Activated CD4-positive, alpha-beta memory T cell treated with anti-CD3 and anti-CD28 coated beads for 36 hours (primary cell): ENCODE measurements at regions of chr7 and their contacts with region 1.

Region 1: DNA sequence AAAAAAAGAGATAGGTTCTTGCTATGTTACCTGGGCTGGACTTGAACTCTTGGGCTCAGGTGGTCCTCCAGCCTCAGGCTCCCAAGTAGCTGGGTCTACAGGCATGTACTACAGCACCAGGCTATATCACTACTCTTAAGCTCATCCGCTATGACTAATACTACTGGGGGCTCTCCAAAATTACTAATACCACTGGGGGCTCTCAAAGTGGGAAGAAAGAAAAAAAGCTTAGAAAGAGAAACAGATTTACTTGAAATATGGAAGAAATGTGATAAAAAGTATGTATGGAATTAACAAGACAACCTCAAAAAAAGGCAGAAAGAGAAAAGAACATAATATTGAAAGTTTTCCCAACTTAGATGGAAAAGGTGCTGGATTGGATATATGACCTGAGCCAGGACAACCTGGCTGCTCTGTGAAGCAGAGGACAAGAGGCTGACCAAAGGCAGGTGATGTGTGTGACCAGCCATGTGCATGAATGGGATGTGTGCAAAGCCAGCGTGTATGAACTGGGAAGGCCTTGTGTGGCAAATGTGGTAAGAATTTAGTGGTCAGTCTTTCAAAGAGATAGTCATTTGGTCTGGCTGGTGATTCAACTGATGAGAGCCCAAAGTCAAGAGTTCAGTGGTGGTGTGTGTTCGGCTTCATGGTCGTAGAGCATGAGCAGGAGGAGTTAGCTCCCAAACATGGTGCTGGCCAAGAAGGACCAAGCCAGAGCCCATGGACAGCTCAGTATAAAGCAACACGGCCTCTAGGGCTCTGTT is 232.4 kb upstream of the KLF14 start:
- DNase-seq: peak; percentile 53
- H3K4me3 Mint-ChIP-seq: peak overlapping the region; percentile 42
- H3K27ac Mint-ChIP-seq: peak overlapping the region; percentile 94
- H3K4me1 Mint-ChIP-seq: peaks cover 77% of the 10 kb centered on the region
- H3K27me3 Mint-ChIP-seq: no peaks in the 10 kb centered on the region

Region 2: GRCh38 chr7:130515315-130516040 is 450.9 kb before region 1 on chr7:
- CTCF ChIA-PET with region 1: no interaction called
- POLR2A ChIA-PET with region 1: no interaction called
- intact Hi-C with region 1: no loop called
- DNase-seq: no peak
- H3K4me3 Mint-ChIP-seq: no peak overlapping the region
- H3K27ac Mint-ChIP-seq: no peak overlapping the region
- H3K4me1 Mint-ChIP-seq: no peaks in the 10 kb centered on the region
- H3K27me3 Mint-ChIP-seq: no peaks in the 10 kb centered on the region

Region 3: GRCh38 chr7:130668257-130669084 is 298.0 kb before region 1 on chr7 and contains the start of gene COPG2:
- CTCF ChIA-PET with region 1: no interaction called
- POLR2A ChIA-PET with region 1: no interaction called
- intact Hi-C with region 1: no loop called
- DNase-seq: peak; percentile 84
- H3K4me3 Mint-ChIP-seq: peak within 1 kb of the TSS; percentile 84
- H3K27ac Mint-ChIP-seq: peak within 1 kb of the TSS; percentile 65
- H3K4me1 Mint-ChIP-seq: peaks cover 18% of the 10 kb centered on the region
- H3K27me3 Mint-ChIP-seq: peaks cover 4% of the 10 kb centered on the region
- total RNA-seq, gene COPG2: 31.5 to 33.4 TPM

Region 4: DNA sequence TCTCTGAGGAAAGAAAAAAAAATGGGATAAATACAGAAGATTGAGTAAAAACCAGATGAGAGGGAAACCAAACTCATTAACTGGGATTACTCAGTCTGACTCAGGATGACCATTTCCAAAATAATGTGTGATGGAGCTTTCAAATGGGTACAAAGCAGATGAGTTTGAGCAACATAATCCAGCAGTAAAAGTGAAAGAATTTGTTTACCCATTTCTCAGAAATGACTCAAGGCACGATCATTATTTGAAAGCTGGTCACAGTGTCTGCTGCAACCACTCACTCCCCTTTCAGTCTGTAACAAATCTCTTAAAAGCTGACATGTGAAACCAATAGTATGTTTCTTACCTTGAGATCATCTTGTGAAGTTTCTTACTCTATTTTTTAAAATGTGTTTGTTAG is 127.7 kb before region 1 on chr7:
- CTCF ChIA-PET with region 1: no interaction called
- POLR2A ChIA-PET with region 1: no interaction called
- intact Hi-C with region 1: no loop called
- DNase-seq: peak; percentile 45
- H3K4me3 Mint-ChIP-seq: no peak overlapping the region
- H3K27ac Mint-ChIP-seq: no peak overlapping the region
- H3K4me1 Mint-ChIP-seq: peaks cover 19% of the 10 kb centered on the region
- H3K27me3 Mint-ChIP-seq: peaks cover 39% of the 10 kb centered on the region

Region 5: GRCh38 chr7:130941322-130942210 is 24.9 kb before region 1 on chr7:
- CTCF ChIA-PET with region 1: interaction called, 3 read pairs
- POLR2A ChIA-PET with region 1: interaction called, 299 read pairs
- intact Hi-C with region 1: loop called (anchors 2 kb)
- DNase-seq: peak; percentile 63
- H3K4me3 Mint-ChIP-seq: peak overlapping the region; percentile 66
- H3K27ac Mint-ChIP-seq: peak overlapping the region; percentile 87
- H3K4me1 Mint-ChIP-seq: peaks cover 89% of the 10 kb centered on the region
- H3K27me3 Mint-ChIP-seq: no peaks in the 10 kb centered on the region

Region 6: DNA sequence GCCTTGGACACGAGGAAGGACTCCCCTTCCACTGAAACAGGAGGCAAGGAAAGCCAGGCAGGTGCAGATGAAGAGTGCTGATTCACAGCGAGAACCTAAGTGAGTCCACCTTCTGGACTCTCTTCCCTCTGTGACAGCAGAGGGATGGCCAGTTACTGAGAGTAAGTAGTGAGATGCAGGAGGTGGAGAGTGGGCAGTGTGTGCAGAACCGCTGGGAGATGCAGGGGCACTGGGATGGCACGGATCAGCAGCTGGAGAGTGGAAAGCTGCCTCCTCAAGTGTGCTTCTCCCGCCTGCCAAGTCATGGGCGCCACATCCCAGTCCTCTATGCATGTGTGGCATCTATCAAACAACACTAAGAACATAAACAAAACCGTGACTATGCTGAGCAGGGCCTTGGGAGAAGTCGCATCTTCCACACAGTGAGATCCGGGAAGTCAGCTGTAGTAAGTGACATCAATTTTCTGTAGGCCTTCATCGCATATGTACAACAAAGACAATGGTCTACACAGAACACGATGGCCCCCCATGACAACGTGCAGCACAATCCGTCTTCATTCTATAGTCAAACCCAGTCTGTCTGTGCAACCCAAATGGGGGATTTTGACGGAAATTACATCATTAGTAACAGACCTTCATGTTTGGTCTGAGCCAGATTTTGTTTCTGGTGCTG is 15.0 kb before region 1 on chr7:
- CTCF ChIA-PET with region 1: interaction called, 3 read pairs
- POLR2A ChIA-PET with region 1: interaction called, 314 read pairs
- intact Hi-C with region 1: loop called (anchors 1 kb)
- DNase-seq: peak; percentile 56
- H3K4me3 Mint-ChIP-seq: no peak overlapping the region
- H3K27ac Mint-ChIP-seq: no peak overlapping the region
- H3K4me1 Mint-ChIP-seq: peaks cover 55% of the 10 kb centered on the region
- H3K27me3 Mint-ChIP-seq: no peaks in the 10 kb centered on the region

Region 7: DNA sequence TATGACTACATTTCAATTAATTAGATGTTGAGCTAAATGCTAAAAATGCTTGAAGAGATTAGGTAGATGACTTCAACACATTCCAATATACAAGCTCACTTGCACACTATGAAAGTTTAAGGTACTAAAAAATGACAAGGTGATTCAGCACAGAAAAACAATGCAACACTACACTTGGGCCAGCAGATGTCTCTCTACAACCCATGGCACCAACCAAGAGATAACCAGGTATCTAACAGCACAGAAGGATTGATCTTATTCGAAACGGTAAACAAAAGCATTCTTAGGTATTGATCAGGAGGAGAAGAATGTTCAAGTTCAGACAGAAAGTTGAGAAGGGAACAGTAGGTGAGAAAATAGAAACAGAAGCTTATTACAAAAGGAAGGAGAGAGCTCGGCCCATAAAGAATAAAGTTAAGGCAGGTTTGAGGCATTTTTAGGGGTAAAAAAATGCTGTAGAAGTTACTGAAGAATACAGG is 15.8 kb after region 1 on chr7:
- CTCF ChIA-PET with region 1: interaction called, 24 read pairs
- POLR2A ChIA-PET with region 1: interaction called, 67 read pairs
- intact Hi-C with region 1: no loop called
- DNase-seq: peak; percentile 48
- H3K4me3 Mint-ChIP-seq: no peak overlapping the region
- H3K27ac Mint-ChIP-seq: no peak overlapping the region
- H3K4me1 Mint-ChIP-seq: peaks cover 59% of the 10 kb centered on the region
- H3K27me3 Mint-ChIP-seq: no peaks in the 10 kb centered on the region

Region 8: GRCh38 chr7:130988443-130988842 is 22.0 kb after region 1 on chr7:
- CTCF ChIA-PET with region 1: interaction called, 7 read pairs
- POLR2A ChIA-PET with region 1: interaction called, 115 read pairs
- intact Hi-C with region 1: no loop called
- DNase-seq: peak; percentile 66
- H3K4me3 Mint-ChIP-seq: peak overlapping the region; percentile 52
- H3K27ac Mint-ChIP-seq: peak overlapping the region; percentile 92
- H3K4me1 Mint-ChIP-seq: peaks cover 88% of the 10 kb centered on the region
- H3K27me3 Mint-ChIP-seq: no peaks in the 10 kb centered on the region

Region 9: GRCh38 chr7:130996841-130997231 is 30.4 kb after region 1 on chr7:
- CTCF ChIA-PET with region 1: interaction called, 4 read pairs
- POLR2A ChIA-PET with region 1: interaction called, 115 read pairs
- intact Hi-C with region 1: no loop called
- DNase-seq: peak; percentile 73
- H3K4me3 Mint-ChIP-seq: peak overlapping the region; percentile 55
- H3K27ac Mint-ChIP-seq: peak overlapping the region; percentile 94
- H3K4me1 Mint-ChIP-seq: peaks cover 90% of the 10 kb centered on the region
- H3K27me3 Mint-ChIP-seq: no peaks in the 10 kb centered on the region

Region 10: DNA sequence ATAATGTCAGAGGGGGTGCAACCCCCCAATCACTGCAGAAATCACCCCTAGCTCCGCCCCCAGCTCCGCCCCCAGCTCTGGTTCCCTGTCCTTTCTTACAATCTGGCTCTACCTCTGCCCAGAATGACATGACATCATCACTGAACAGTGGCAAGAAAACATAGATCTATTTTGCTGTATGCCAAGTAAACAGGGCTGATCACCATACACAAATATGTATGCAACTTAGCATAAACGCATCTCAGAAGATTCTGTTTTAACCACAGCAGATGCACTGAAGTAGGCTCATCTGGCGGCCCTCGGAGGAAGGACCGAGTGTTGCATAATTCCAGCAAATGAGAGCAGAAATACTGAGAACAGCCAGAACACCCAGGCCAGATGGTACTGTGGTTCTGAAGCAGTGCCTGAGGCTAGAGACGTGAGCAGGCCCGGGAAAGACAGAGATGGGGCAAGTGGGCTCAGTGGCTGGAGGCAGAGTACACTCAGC is 60.9 kb after region 1 on chr7:
- CTCF ChIA-PET with region 1: no interaction called
- POLR2A ChIA-PET with region 1: interaction called, 49 read pairs
- intact Hi-C with region 1: loop called (anchors 1 kb)
- DNase-seq: peak; percentile 66
- H3K4me3 Mint-ChIP-seq: peak overlapping the region; percentile 36
- H3K27ac Mint-ChIP-seq: peak overlapping the region; percentile 79
- H3K4me1 Mint-ChIP-seq: peaks cover 87% of the 10 kb centered on the region
- H3K27me3 Mint-ChIP-seq: no peaks in the 10 kb centered on the region